MCF 10A (cell line): ENCODE measurements at regions of chr6 and their contacts with region 1.

Region 1: GRCh38 chr6:43575772-43576551 is at the starts of genes POLH and XPO5:
- DNase-seq: peak; percentile 92
- H3K4me3 Mint-ChIP-seq: peak within 1 kb of the TSS; percentile 100
- H3K27ac Mint-ChIP-seq: peak within 1 kb of the TSS; percentile 90
- H3K4me1 Mint-ChIP-seq: peaks cover 20% of the 10 kb centered on the region
- H3K27me3 Mint-ChIP-seq: no peaks in the 10 kb centered on the region
- CTCF ChIP-seq: peak; percentile 8
- total RNA-seq, gene POLH: 34.5 and 36.7 TPM in 2 replicates
- total RNA-seq, gene XPO5: 92.0 and 98.6 TPM in 2 replicates

Region 2: GRCh38 chr6:43516697-43517504 is 59.1 kb before region 1 on chr6 and contains the starts of genes POLR1C and YIPF3:
- CTCF ChIA-PET with region 1: no interaction called
- POLR2A ChIA-PET with region 1: interaction called, 18 read pairs
- intact Hi-C with region 1: no loop called
- DNase-seq: peak; percentile 98
- H3K4me3 Mint-ChIP-seq: no peak within 1 kb of the TSS
- H3K27ac Mint-ChIP-seq: no peak within 1 kb of the TSS
- H3K4me1 Mint-ChIP-seq: peaks cover 13% of the 10 kb centered on the region
- H3K27me3 Mint-ChIP-seq: no peaks in the 10 kb centered on the region
- CTCF ChIP-seq: no peak
- total RNA-seq, gene POLR1C: 54.9 and 63.6 TPM in 2 replicates
- total RNA-seq, gene YIPF3: 65.1 and 72.9 TPM in 2 replicates

Region 3: DNA sequence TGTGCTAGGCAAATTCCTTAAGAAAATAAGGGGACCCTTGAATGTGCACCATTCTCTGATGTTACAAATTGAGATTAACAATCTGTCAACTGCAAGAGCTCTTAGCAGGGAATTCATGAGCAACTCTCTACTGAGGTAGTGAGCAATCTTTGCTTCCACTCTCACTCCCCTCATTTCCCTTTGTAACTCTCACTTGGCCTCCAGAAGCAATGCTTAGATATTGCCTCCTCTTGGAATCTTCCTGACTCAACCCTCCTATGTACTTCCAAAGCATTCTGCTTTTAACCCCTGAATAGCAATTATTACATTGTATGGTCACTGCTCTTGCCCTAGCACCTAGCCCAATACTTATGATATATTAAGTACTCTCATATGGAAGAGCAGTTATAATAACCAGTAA is 16.6 kb before region 1 on chr6:
- CTCF ChIA-PET with region 1: no interaction called
- POLR2A ChIA-PET with region 1: interaction called, 26 read pairs
- intact Hi-C with region 1: no loop called
- DNase-seq: no peak
- H3K4me3 Mint-ChIP-seq: no peak overlapping the region
- H3K27ac Mint-ChIP-seq: no peak overlapping the region
- H3K4me1 Mint-ChIP-seq: no peaks in the 10 kb centered on the region
- H3K27me3 Mint-ChIP-seq: no peaks in the 10 kb centered on the region
- CTCF ChIP-seq: no peak

Region 4: DNA sequence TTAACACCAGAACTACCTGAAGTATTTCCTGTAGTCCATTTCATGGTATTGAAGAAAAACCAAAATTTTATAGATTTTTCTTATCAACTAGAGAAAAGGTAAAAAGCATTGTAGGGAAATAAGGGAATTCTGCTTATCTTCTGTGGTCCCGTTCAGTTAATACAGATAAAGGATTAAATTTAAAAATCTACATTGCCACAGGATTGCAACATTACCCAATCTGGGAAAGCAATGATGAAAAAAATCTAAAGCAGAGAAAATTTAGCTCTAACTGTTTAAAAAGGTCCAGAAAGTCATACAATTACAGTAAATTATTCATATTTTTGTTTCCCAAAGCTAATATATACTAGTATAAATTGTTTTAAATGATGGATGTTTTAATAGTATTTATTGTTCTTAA is 18.0 kb after region 1 on chr6:
- CTCF ChIA-PET with region 1: interaction called, 3 read pairs
- POLR2A ChIA-PET with region 1: interaction called, 20 read pairs
- intact Hi-C with region 1: no loop called
- DNase-seq: no peak
- H3K4me3 Mint-ChIP-seq: no peak overlapping the region
- H3K27ac Mint-ChIP-seq: no peak overlapping the region
- H3K4me1 Mint-ChIP-seq: no peaks in the 10 kb centered on the region
- H3K27me3 Mint-ChIP-seq: no peaks in the 10 kb centered on the region
- CTCF ChIP-seq: no peak